HEK293 (cell line): ENCODE measurements at regions of chr22 and their contacts with region 1.

Region 1: DNA sequence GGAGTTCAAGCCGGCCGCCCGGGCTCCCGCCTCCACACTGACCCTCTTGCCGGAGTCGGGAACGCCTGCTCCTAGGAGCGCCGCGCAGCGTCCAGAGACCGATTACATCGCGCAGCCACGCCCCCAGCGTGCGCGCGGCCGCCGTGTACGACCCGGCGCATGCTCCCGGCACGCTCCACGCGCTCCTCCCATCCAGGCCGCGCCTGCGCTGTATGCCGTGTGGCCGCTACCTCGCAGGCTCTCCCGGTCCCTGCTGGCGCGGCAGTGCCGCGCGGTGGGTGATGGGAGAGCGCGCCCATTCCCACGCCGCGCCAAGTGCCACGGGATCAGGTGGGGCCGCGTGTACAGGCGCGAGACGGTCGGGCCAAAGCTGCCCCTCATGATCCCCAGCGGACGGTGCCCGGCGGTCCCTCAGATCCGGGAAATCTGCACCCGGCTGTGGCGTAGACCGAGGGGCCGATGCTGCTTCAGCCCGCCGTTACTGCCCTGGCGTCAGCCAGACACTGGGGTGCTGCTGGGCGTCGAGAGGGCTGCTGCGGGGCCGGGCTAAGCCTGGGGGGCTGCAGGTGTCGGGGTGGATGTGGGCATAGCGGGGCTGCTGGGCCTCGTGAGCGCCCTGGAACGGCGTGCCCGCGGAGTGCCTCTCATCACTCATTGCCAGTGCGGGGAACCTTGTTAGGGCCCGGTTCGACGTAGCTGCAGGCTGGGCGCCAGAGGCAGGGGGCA is at the starts of genes GNB1L and RTL10:
- H3K4me3 ChIP-seq: peak within 1 kb of the TSS; percentile 86
- H3K27ac ChIP-seq: peak within 1 kb of the TSS; percentile 95
- H3K4me1 ChIP-seq: no peaks in the 10 kb centered on the region
- CTCF ChIP-seq: peak; percentile 82

Region 2: DNA sequence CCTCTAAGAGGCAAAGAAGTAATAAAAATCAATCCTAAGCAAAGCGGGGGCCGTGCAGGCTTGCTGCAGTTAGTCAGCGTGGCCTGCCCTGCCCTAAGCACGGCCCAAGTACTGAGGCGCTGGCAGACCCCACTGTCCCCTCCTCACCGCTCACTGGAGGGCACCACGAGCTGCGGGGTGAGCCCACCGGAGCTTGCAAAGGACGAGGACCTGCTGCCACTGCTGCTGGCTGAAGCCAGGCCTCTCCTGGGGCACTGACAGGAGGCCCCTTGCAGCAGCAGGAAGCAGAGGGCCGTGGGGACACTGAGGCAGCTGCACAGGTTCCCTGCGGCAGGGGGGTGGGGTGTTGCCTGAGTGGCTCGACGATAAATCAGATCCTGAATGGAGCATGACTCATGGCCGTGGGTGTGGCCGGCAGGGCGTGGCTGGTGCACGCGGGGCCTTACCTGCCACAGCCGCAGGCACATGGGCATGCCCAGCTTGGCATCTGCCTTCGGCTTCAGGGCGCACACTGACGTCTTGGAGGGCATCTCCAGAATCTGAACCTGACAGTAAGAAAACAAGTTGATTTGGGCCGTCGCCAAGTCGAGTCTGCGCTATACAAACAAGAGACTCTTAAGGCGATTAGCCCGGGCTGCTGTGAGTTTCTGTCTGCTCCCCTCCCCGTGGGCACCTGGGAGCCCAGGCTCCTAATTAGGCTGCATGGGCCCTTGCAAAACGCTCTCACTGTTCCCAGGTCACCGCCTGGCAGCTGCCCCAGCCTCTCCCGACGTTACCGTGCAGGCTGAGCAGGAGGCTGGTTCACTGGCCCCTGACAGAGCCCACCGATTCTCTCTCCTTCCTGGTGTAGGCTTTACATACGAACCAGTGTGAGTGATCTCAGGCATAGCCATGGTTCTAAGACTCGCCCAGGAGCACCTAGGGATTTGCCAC is 48.5 kb before region 1 on chr22:
- CTCF ChIA-PET with region 1: interaction called, 5 read pairs
- POLR2A ChIA-PET with region 1: interaction called, 12 read pairs
- H3K4me3 ChIP-seq: no peak overlapping the region
- H3K27ac ChIP-seq: no peak overlapping the region; the same call in 1 of the 2 replicates
- H3K4me1 ChIP-seq: peaks cover 3% of the 10 kb centered on the region
- CTCF ChIP-seq: no peak

Region 3: DNA sequence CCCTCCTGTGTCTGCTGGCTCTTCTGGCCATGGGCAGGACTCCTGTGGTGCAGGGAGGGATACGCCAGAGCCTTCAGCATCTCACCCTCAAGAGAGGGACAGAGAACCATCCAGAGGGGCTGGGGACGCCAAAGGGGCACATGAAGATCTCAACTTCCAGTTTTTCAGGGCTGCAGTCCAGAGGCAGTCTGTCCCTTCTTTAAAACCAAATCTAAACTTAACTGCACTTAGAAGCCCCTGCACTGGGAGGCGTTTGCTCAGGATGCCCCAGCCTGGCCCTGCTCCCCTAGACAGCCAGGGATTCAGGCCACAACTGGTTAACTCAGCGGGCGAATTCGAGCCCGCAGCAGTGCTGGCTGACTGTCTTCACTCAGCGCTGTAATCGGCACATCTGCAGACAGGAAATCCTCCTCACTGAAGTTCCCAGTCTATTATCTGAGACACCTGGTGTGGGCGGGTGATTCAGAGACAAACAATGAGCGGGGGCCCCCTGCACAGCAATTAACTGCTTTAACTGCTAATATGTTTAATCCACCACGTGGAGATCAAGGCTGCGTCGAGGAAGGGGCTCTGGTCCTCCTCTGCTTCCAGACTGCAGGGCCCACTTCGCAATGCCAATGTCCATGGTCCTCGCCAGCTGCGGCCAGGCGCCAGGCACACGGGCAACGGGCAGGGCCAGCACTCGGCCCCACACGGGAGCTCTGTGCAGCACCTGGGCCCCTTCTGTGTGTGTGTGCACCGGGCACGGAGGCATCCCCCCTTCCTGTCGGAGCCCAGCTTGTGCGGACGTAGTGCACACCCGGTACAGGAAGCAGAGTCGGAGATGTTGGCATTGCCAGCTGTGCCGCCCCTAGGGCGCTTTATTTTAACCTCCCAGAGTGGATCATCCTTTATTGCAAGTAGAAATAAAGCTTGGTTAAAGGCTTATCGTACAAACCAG is 36.6 kb after region 1 on chr22:
- CTCF ChIA-PET with region 1: no interaction called
- POLR2A ChIA-PET with region 1: interaction called, 10 read pairs
- H3K4me3 ChIP-seq: no peak overlapping the region
- H3K27ac ChIP-seq: peak overlapping the region; percentile 13; the same call in 1 of the 2 replicates
- H3K4me1 ChIP-seq: peaks cover 7% of the 10 kb centered on the region
- CTCF ChIP-seq: no peak